Panc1 (cell line): ENCODE measurements at regions of chr12 and their contacts with region 1.

Region 1: DNA sequence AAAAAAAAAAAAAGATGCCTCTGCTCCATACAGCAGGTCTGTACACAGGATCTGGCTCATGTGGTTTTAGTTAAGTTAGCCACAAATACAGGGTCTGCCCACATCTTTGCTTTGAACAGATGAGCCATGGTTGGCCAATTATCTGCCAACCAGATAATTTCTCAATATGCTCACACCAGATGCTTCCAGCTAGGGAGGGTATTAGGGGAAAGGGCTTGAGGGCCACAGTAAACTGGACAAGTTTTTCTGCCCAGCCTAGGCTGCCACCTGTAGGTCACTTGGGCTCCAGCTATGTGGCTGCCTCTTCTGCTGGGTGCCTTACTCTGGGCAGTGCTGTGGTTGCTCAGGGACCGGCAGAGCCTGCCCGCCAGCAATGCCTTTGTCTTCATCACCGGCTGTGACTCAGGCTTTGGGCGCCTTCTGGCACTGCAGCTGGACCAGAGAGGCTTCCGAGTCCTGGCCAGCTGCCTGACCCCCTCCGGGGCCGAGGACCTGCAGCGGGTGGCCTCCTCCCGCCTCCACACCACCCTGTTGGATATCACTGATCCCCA is 776 bp downstream of the RDH5 start:
- DNase-seq: peak; percentile 78
- ATAC-seq: peak; percentile 88
- H3K4me3 ChIP-seq: no peak overlapping the region
- H3K27ac ChIP-seq: no peak overlapping the region
- H3K4me1 ChIP-seq: peaks cover 31% of the 10 kb centered on the region
- H3K27me3 ChIP-seq: no peaks in the 10 kb centered on the region
- CTCF ChIP-seq: peak; percentile 88

Region 2: GRCh38 chr12:54439521-54440255 is 1281.3 kb before region 1 on chr12:
- CTCF ChIA-PET with region 1: no interaction called
- POLR2A ChIA-PET with region 1: interaction called, 12 read pairs
- in situ Hi-C with region 1: no loop called
- intact Hi-C with region 1: no loop called
- DNase-seq: no peak
- ATAC-seq: peak; percentile 89
- H3K4me3 ChIP-seq: no peak overlapping the region
- H3K27ac ChIP-seq: no peak overlapping the region
- H3K4me1 ChIP-seq: peaks cover 3% of the 10 kb centered on the region; the same call in 1 of the 2 replicates
- H3K27me3 ChIP-seq: peaks cover 5% of the 10 kb centered on the region; the same call in 1 of the 2 replicates
- CTCF ChIP-seq: peak; percentile 84

Region 3: GRCh38 chr12:55659486-55660385 is 61.2 kb before region 1 on chr12:
- CTCF ChIA-PET with region 1: interaction called, 4 read pairs
- POLR2A ChIA-PET with region 1: no interaction called
- in situ Hi-C with region 1: no loop called
- intact Hi-C with region 1: loop called (anchors 2 kb)
- DNase-seq: no peak
- ATAC-seq: peak; percentile 79; the same call in 1 of the 2 replicates
- H3K4me3 ChIP-seq: no peak overlapping the region
- H3K27ac ChIP-seq: no peak overlapping the region
- H3K4me1 ChIP-seq: no peaks in the 10 kb centered on the region
- H3K27me3 ChIP-seq: peaks cover 4% of the 10 kb centered on the region; the same call in 1 of the 2 replicates
- CTCF ChIP-seq: peak; percentile 80

Region 4: GRCh38 chr12:55681142-55682077 is 39.6 kb before region 1 on chr12:
- CTCF ChIA-PET with region 1: interaction called, 9 read pairs
- POLR2A ChIA-PET with region 1: no interaction called
- in situ Hi-C with region 1: no loop called
- intact Hi-C with region 1: loop called (anchors 2 kb)
- DNase-seq: no peak
- ATAC-seq: peak; percentile 94
- H3K4me3 ChIP-seq: peak overlapping the region; percentile 38 to 64
- H3K27ac ChIP-seq: 0 out of 2 replicates have a peak overlapping the region, but pooled peaks have one; percentile 18
- H3K4me1 ChIP-seq: peaks cover 5% of the 10 kb centered on the region; the same call in 1 of the 2 replicates
- H3K27me3 ChIP-seq: peaks cover 2% of the 10 kb centered on the region; the same call in 1 of the 2 replicates
- CTCF ChIP-seq: peak; percentile 81

Region 5: GRCh38 chr12:55745361-55746146 is 24.6 kb after region 1 on chr12:
- CTCF ChIA-PET with region 1: no interaction called
- POLR2A ChIA-PET with region 1: interaction called, 11 read pairs
- in situ Hi-C with region 1: no loop called
- intact Hi-C with region 1: no loop called
- DNase-seq: no peak
- ATAC-seq: no peak
- H3K4me3 ChIP-seq: no peak overlapping the region
- H3K27ac ChIP-seq: no peak overlapping the region
- H3K4me1 ChIP-seq: peaks cover 24% of the 10 kb centered on the region
- H3K27me3 ChIP-seq: no peaks in the 10 kb centered on the region
- CTCF ChIP-seq: no peak